ENCODE measurements at regions of chr14 and their contacts with region 1.

Region 1: DNA sequence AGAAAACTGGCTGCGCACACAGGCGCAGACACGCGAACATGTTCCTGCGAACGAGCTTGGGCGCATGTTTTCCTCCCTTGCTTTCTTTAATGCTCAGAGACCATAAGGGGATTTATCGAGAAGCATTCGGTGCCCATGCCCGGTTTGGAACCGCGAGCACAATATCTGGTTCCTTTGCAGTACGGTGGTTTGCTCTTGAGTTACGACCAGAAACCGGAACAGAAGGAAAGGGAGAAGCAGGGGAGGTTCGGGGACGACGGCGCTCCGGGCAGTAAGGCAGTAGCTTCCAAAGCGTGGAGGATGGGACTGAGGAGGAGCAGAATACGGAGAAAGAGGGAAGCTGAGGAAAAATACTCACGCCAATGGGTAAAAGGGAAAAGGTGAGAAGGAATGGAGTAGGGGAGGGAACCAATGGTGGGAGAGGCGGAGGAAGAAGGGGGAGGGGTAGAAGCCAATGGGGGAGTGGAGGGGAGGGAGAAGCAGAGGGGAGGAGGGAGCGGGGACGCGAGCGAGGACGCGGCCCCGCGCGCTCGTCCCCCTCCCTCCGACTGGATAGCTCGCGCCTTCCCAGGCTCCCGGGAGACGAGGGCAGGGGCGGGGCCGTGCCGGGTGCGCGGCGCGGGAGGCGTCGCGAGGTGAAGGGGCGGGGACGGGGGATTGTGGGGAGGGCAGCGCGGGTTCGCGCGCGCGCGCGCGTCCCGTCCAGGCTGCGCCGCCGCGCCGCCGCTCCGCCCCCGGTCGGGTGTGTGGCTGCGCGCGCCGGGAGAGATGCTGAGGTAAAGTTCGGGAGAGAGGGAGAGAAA is 625 bp upstream of the ARHGAP5 start:
- DNase-seq: peak; percentile 59 to 91 (median 73)
- ATAC-seq: peak; percentile 55
- H3K4me3 ChIP-seq: peak overlapping the region; percentile 92
- H3K4me3 Mint-ChIP-seq: peak overlapping the region; percentile 96
- H3K27ac ChIP-seq: peak overlapping the region; percentile 57 to 75
- H3K27ac Mint-ChIP-seq: peak overlapping the region; percentile 89
- H3K4me1 ChIP-seq: peaks cover 6% of the 10 kb centered on the region
- H3K4me1 Mint-ChIP-seq: peaks cover 44% of the 10 kb centered on the region
- H3K27me3 ChIP-seq: no peaks in the 10 kb centered on the region
- H3K27me3 Mint-ChIP-seq: no peaks in the 10 kb centered on the region
- CTCF ChIP-seq: no peak

Region 2: GRCh38 chr14:31420319-31421111 is 656.0 kb before region 1 on chr14 and contains the start of gene HEATR5A:
- CTCF ChIA-PET with region 1: no interaction called
- POLR2A ChIA-PET with region 1: interaction called, 8 read pairs
- intact Hi-C with region 1: loop called in 1 of 2 experiments (anchors 5 kb)
- DNase-seq: peak; percentile 83 to 96 (median 93)
- ATAC-seq: peak; percentile 96
- H3K4me3 ChIP-seq: peak within 1 kb of the TSS; percentile 99
- H3K4me3 Mint-ChIP-seq: peak within 1 kb of the TSS; percentile 99
- H3K27ac ChIP-seq: peak within 1 kb of the TSS in 1 of 2 donors; percentile 64
- H3K27ac Mint-ChIP-seq: peak within 1 kb of the TSS; percentile 89
- H3K4me1 ChIP-seq: peaks cover 4% of the 10 kb centered on the region
- H3K4me1 Mint-ChIP-seq: peaks cover 33% of the 10 kb centered on the region
- H3K27me3 ChIP-seq: no peaks in the 10 kb centered on the region
- H3K27me3 Mint-ChIP-seq: no peaks in the 10 kb centered on the region
- CTCF ChIP-seq: peak; percentile 29
- total RNA-seq, gene HEATR5A: 5.2 to 5.5 TPM

Region 3: DNA sequence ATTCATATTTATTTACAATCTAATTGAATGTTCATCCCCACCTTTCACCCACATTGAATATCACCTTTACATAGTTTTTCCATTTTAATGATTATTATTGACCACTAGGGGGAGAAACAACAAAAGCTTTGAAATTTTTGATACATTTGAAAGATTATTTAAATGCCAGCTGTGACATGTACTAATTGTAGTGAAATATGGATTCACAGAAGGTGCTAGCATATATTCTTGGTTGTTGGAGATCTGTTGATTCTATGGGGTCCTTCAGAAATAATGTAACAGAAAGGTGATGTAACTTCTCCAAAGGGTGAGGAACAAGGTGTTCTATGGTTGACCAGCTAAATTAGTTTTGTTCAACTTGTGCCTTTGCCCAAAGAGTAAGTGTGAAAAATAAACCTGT is 566.3 kb before region 1 on chr14:
- CTCF ChIA-PET with region 1: no interaction called
- POLR2A ChIA-PET with region 1: no interaction called
- intact Hi-C with region 1: loop called in 1 of 2 experiments (anchors 5 kb)
- DNase-seq: peak in 3 of 14 experiments; percentile 29 to 36 (median 29)
- ATAC-seq: no peak
- H3K4me3 ChIP-seq: no peak overlapping the region
- H3K4me3 Mint-ChIP-seq: no peak overlapping the region
- H3K27ac ChIP-seq: no peak overlapping the region
- H3K27ac Mint-ChIP-seq: no peak overlapping the region
- H3K4me1 ChIP-seq: no peaks in the 10 kb centered on the region
- H3K4me1 Mint-ChIP-seq: no peaks in the 10 kb centered on the region
- H3K27me3 ChIP-seq: no peaks in the 10 kb centered on the region
- H3K27me3 Mint-ChIP-seq: no peaks in the 10 kb centered on the region
- CTCF ChIP-seq: peak; percentile 73

Region 4: DNA sequence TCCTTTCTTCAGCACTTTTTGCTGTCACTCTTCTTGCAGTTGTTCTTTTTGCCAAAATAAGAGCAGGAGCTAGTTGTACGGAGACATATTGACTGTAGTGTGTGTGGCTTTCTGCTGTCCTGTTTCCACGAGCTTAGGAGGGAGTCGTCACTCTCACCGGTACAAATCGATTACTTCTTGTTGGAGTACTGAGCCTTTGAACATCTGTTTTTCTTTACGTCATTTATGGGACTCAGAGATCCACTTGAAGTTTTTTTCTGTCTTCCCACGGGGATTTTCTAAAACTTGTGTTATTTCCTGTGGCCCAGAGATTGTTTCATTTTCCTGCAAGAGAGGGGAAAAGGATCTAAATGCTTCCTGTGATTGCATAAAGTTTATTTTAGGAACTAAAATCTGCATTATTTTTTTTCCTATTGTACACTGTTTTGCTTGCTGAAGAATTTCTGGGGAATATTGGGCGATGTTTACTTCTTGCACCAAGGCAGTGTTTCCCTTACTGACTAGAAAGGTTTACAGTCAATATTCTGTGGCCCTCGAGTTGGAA is 199.2 kb before region 1 on chr14:
- CTCF ChIA-PET with region 1: no interaction called
- POLR2A ChIA-PET with region 1: no interaction called
- intact Hi-C with region 1: no loop called
- DNase-seq: no peak
- ATAC-seq: no peak
- H3K4me3 ChIP-seq: no peak overlapping the region
- H3K4me3 Mint-ChIP-seq: no peak overlapping the region
- H3K27ac ChIP-seq: no peak overlapping the region
- H3K27ac Mint-ChIP-seq: no peak overlapping the region
- H3K4me1 ChIP-seq: no peaks in the 10 kb centered on the region
- H3K4me1 Mint-ChIP-seq: no peaks in the 10 kb centered on the region
- H3K27me3 ChIP-seq: no peaks in the 10 kb centered on the region
- H3K27me3 Mint-ChIP-seq: peaks cover 8% of the 10 kb centered on the region
- CTCF ChIP-seq: no peak

Region 5: GRCh38 chr14:31926123-31926522 is 150.4 kb before region 1 on chr14:
- CTCF ChIA-PET with region 1: interaction called, 5 read pairs
- POLR2A ChIA-PET with region 1: no interaction called
- intact Hi-C with region 1: loop called in 1 of 2 experiments (anchors 2 kb)
- DNase-seq: peak in 4 of 14 experiments; percentile 23 to 66 (median 64)
- ATAC-seq: peak; percentile 43
- H3K4me3 ChIP-seq: no peak overlapping the region
- H3K4me3 Mint-ChIP-seq: no peak overlapping the region
- H3K27ac ChIP-seq: no peak overlapping the region
- H3K27ac Mint-ChIP-seq: no peak overlapping the region
- H3K4me1 ChIP-seq: no peaks in the 10 kb centered on the region
- H3K4me1 Mint-ChIP-seq: peaks cover 11% of the 10 kb centered on the region
- H3K27me3 ChIP-seq: no peaks in the 10 kb centered on the region
- H3K27me3 Mint-ChIP-seq: no peaks in the 10 kb centered on the region
- CTCF ChIP-seq: peak; percentile 64

Region 6: GRCh38 chr14:32038876-32039275 is 37.6 kb before region 1 on chr14:
- CTCF ChIA-PET with region 1: no interaction called
- POLR2A ChIA-PET with region 1: no interaction called
- intact Hi-C with region 1: no loop called
- DNase-seq: no peak
- ATAC-seq: no peak
- H3K4me3 ChIP-seq: no peak overlapping the region
- H3K4me3 Mint-ChIP-seq: no peak overlapping the region
- H3K27ac ChIP-seq: no peak overlapping the region
- H3K27ac Mint-ChIP-seq: no peak overlapping the region
- H3K4me1 ChIP-seq: no peaks in the 10 kb centered on the region
- H3K4me1 Mint-ChIP-seq: no peaks in the 10 kb centered on the region
- H3K27me3 ChIP-seq: no peaks in the 10 kb centered on the region
- H3K27me3 Mint-ChIP-seq: peaks cover 21% of the 10 kb centered on the region
- CTCF ChIP-seq: no peak

Region 7: DNA sequence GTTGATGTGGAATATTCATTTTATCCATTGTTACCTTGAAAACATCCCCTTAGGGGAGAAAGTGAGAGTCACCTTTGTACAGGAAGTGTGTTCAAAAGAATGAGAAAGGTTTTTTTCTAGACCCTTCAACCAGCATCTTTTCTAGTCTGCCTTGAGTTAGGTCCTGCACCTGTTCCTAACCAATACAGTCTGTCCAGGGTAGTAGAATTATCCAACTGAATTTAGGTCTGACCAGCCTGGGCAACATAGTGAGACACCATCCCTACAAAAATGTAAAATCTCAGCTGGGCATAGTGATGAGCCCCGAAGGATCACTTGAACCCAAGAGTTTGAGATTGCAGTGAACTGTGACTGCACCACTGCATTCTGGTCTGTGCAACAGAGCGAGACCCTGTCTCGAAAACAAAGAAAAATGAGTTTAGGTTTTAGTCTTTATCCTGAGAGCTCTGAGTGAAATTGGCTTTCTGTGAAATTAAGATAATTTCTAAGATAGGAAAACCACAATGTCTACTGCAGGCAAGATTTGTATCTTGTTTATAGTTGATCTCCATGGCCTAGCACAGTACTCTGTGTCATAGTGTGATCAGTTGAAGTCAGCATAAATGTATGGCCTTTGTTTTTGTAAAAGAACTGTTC is 25.8 kb after region 1 on chr14:
- CTCF ChIA-PET with region 1: interaction called, 4 read pairs
- POLR2A ChIA-PET with region 1: no interaction called
- intact Hi-C with region 1: loop called in 1 of 2 experiments (anchors 2 kb)
- DNase-seq: peak in 5 of 14 experiments; percentile 5 to 59 (median 43)
- ATAC-seq: peak; percentile 94
- H3K4me3 ChIP-seq: peak overlapping the region; percentile 17
- H3K4me3 Mint-ChIP-seq: peak overlapping the region; percentile 52
- H3K27ac ChIP-seq: peak overlapping the region in 1 of 2 donors; percentile 76
- H3K27ac Mint-ChIP-seq: peak overlapping the region; percentile 81
- H3K4me1 ChIP-seq: peaks cover 10% of the 10 kb centered on the region
- H3K4me1 Mint-ChIP-seq: peaks cover 62% of the 10 kb centered on the region
- H3K27me3 ChIP-seq: no peaks in the 10 kb centered on the region
- H3K27me3 Mint-ChIP-seq: no peaks in the 10 kb centered on the region
- CTCF ChIP-seq: no peak

Region 8: DNA sequence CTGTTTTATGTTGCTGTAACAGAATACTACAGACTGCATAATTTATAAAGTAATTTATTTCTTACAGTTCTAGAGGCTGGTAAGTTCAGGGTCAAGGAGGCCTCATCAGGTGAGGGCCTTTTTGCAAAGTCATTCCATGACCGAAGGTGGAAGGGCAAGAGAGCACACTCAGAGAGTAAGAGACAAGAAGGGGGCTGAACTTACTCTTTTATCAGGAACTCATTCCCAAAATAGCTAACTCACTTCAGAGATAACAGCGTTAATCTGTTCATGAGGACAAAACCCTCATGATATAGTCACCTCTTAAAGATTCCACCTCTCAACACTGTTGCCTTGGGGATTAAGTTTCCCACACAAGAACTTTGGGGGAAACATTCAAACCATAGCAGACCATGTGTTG is 73.9 kb after region 1 on chr14:
- CTCF ChIA-PET with region 1: interaction called, 4 read pairs
- POLR2A ChIA-PET with region 1: no interaction called
- intact Hi-C with region 1: loop called in 1 of 2 experiments (anchors 5 kb)
- DNase-seq: no peak
- ATAC-seq: no peak
- H3K4me3 ChIP-seq: no peak overlapping the region
- H3K4me3 Mint-ChIP-seq: no peak overlapping the region
- H3K27ac ChIP-seq: no peak overlapping the region
- H3K27ac Mint-ChIP-seq: no peak overlapping the region
- H3K4me1 ChIP-seq: no peaks in the 10 kb centered on the region
- H3K4me1 Mint-ChIP-seq: no peaks in the 10 kb centered on the region
- H3K27me3 ChIP-seq: no peaks in the 10 kb centered on the region
- H3K27me3 Mint-ChIP-seq: no peaks in the 10 kb centered on the region
- CTCF ChIP-seq: no peak

Region 9: GRCh38 chr14:32252030-32252670 is 175.7 kb after region 1 on chr14:
- CTCF ChIA-PET with region 1: interaction called, 41 read pairs
- POLR2A ChIA-PET with region 1: interaction called, 8 read pairs
- intact Hi-C with region 1: loop called (anchors 1 kb)
- DNase-seq: peak in 13 of 14 experiments; percentile 2 to 80 (median 25)
- ATAC-seq: peak; percentile 94
- H3K4me3 ChIP-seq: no peak overlapping the region
- H3K4me3 Mint-ChIP-seq: no peak overlapping the region
- H3K27ac ChIP-seq: no peak overlapping the region
- H3K27ac Mint-ChIP-seq: no peak overlapping the region
- H3K4me1 ChIP-seq: peaks cover 2% of the 10 kb centered on the region
- H3K4me1 Mint-ChIP-seq: no peaks in the 10 kb centered on the region
- H3K27me3 ChIP-seq: no peaks in the 10 kb centered on the region
- H3K27me3 Mint-ChIP-seq: no peaks in the 10 kb centered on the region
- CTCF ChIP-seq: peak; percentile 92

Measured in CD4-positive, alpha-beta T cell (primary cell).